ENCODE measurements at regions of chr18 and their contacts with region 1.

Region 1: DNA sequence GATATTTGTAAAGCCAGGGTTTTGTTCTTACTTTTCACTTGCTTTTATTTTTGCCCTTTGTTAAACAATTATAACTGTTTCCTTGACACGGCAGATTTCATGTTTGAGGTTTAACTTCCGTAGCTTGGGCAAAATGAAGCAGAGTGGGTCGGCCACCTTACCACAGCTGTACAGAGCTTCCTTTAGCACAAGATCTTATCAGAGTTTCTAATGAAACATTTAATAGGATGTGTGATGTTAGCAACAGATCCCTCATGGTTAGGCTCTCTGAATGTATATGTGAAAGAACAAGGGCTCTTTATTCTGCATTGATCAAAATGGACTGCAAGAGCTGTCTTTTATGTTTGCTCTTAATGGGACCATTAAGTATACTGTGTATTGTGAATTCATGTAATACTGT is 22.3 kb downstream of the RNF125 start:
- DNase-seq: peak; percentile 66
- H3K4me3 Mint-ChIP-seq: peak overlapping the region; percentile 64
- H3K27ac Mint-ChIP-seq: peak overlapping the region; percentile 91
- H3K4me1 Mint-ChIP-seq: peaks cover 61% of the 10 kb centered on the region
- H3K27me3 Mint-ChIP-seq: no peaks in the 10 kb centered on the region

Region 2: DNA sequence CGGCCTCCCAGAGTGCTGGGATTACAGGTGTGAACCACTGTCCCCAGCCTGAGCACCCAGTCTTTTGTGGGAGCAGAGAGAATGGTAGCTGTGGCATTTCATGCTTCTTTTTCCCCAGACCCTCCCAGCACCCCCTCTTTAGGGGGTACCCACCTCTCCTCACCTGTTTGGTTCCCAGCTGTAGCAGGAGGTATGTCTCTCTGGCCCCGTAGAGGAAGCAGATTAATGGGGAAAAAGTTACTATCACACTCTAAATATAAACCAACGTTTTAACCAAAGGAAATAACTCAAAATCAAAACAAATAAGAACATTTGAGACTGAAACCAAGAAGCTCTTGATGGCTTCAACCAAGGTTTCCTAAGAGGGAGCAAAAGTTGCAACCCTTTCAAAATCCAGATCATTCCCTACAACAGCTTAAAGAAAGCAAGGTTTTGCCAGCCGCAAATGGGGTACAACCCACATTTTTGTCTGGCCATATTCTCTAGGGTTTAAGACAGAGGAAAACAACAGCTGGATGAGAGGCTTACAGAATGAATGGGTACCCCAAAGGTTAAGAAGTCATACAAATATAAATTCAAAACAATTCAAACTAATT is 14.3 kb before region 1 on chr18:
- intact Hi-C with region 1: loop called (anchors 2 kb)
- DNase-seq: no peak
- H3K4me3 Mint-ChIP-seq: peak overlapping the region; percentile 62
- H3K27ac Mint-ChIP-seq: peak overlapping the region; percentile 70
- H3K4me1 Mint-ChIP-seq: peaks cover 68% of the 10 kb centered on the region
- H3K27me3 Mint-ChIP-seq: no peaks in the 10 kb centered on the region

Measured in activated T-helper 2 cell treated with anti-CD3 and anti-CD28 coated beads, Interferon-gamma antibody, Interleukin-2, Interleukin-4, amounts not matched to agents 10 μg/mL and 5 μg/mL and 100 μg/mL, durations not matched to agents 14 hours and 24 hours and 36 hours (primary cell).